PC-9 (cell line): ENCODE measurements at regions of chr3 and their contacts with region 1.

Region 1: DNA sequence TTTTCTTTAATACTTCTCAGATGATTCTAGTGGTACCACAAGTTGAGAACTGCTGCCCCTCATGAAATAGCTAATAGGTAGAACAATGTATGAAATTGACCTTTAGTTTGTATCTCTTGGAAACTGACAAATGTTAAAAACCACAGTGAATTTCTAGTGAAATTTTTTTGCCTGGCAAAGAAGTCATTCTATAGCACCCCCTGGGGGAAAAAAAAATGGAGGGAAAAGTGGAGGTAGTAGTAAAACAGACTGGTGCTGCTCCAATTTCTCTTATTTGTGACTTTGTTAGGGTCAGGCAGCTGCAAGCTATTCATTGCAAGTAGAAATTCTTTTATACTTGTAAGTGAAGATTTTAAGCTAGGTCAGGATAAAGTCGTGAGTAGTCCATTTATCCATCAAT is 605.0 kb downstream of the NLGN1 start:
- DNase-seq: no peak
- H3K4me3 ChIP-seq: no peak overlapping the region
- H3K27ac ChIP-seq: no peak overlapping the region
- H3K4me1 ChIP-seq: no peaks in the 10 kb centered on the region
- H3K27me3 ChIP-seq: no peaks in the 10 kb centered on the region
- CTCF ChIP-seq: peak; percentile 39; the same call in 1 of the 2 replicates

Region 2: GRCh38 chr3:173584093-173584837 is 418.3 kb before region 1 on chr3:
- CTCF ChIA-PET with region 1: no interaction called
- POLR2A ChIA-PET with region 1: no interaction called
- intact Hi-C with region 1: loop called (anchors 5 kb)
- DNase-seq: peak in 1 of 2 experiments; percentile 56
- H3K4me3 ChIP-seq: peak overlapping the region; percentile 20; the same call in 1 of the 2 replicates
- H3K27ac ChIP-seq: no peak overlapping the region
- H3K4me1 ChIP-seq: no peaks in the 10 kb centered on the region
- H3K27me3 ChIP-seq: no peaks in the 10 kb centered on the region
- CTCF ChIP-seq: peak; percentile 77

Region 3: GRCh38 chr3:174072675-174073074 is 70.1 kb after region 1 on chr3:
- CTCF ChIA-PET with region 1: interaction called, 10 read pairs
- POLR2A ChIA-PET with region 1: no interaction called
- intact Hi-C with region 1: no loop called
- DNase-seq: no peak
- H3K4me3 ChIP-seq: no peak overlapping the region
- H3K27ac ChIP-seq: no peak overlapping the region
- H3K4me1 ChIP-seq: 0 out of 2 replicates have a peak, but pooled peaks cover 6% of the 10 kb centered on the region
- H3K27me3 ChIP-seq: no peaks in the 10 kb centered on the region
- CTCF ChIP-seq: no peak